ENCODE measurements at regions of chr10 and their contacts with region 1.

Region 1: GRCh38 chr10:16828114-16828568 is 10.9 kb upstream of the RSU1 start:
- DNase-seq: peak; percentile 93
- H3K4me3 ChIP-seq: peak overlapping the region in 1 of 3 experiments; percentile 51
- H3K27ac ChIP-seq: peak overlapping the region; percentile 71
- H3K4me1 ChIP-seq: peaks cover 34% of the 10 kb centered on the region
- H3K27me3 ChIP-seq: no peaks in the 10 kb centered on the region
- CTCF ChIP-seq: peak; percentile 35 to 39
- POLR2A ChIP-seq: no peak

Region 2: DNA sequence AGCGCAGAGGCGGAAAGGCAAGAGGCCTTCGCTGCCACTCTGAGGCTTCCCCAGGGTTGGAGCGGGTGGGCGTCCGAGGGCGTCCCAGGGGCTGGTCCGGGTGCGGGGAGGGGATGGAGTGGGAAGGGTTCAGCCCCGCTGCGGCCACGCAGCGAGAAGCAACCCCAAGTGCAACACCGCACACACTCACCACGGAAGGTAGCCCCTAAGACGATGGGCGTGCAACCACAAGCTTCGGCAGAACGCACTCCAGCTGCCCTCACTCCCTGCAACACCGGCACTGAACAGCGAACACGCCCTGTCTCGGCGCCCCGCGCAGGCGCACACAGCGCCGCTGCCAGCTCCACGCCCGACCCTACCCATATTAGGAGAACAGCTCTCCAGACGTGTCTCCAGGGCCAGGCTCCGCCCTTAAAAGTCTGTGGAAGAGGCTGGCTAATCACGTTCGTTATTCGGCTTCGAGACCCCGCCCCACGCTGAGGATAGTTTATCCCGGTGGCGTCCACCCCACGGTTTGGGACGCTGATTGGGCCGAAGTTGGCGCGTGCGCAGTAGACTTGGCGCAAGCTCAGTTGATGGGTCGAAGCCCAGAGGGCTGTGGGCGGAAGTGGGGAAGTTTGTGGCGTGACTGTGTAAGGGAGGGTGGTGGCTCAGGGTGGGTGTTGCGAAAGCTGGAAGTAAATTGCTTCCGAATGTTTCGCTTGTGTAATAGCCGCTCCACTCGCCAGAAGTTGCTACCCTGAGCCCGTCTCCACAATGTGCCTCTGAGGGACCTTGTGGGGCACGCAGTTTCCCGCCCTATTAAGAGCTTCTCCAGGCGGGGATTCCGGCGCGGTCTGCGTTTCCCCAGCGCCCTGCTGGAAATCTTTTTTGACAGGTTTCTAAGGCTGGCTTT is 10.8 kb before region 1 on chr10 and contains the start of gene RSU1:
- CTCF ChIA-PET with region 1: interaction called, 6 read pairs
- POLR2A ChIA-PET with region 1: interaction called, 5 read pairs
- dilution Hi-C with region 1: no loop called
- intact Hi-C with region 1: loop called (anchors 1 kb)
- DNase-seq: peak; percentile 100
- H3K4me3 ChIP-seq: peak within 1 kb of the TSS; percentile 43 to 86 (median 62)
- H3K27ac ChIP-seq: peak within 1 kb of the TSS; percentile 78
- H3K4me1 ChIP-seq: peaks cover 25% of the 10 kb centered on the region
- H3K27me3 ChIP-seq: no peaks in the 10 kb centered on the region
- CTCF ChIP-seq: no peak
- POLR2A ChIP-seq: peak; percentile 49
- total RNA-seq, gene RSU1: 91.9 and 104 TPM in 2 replicates

Region 3: DNA sequence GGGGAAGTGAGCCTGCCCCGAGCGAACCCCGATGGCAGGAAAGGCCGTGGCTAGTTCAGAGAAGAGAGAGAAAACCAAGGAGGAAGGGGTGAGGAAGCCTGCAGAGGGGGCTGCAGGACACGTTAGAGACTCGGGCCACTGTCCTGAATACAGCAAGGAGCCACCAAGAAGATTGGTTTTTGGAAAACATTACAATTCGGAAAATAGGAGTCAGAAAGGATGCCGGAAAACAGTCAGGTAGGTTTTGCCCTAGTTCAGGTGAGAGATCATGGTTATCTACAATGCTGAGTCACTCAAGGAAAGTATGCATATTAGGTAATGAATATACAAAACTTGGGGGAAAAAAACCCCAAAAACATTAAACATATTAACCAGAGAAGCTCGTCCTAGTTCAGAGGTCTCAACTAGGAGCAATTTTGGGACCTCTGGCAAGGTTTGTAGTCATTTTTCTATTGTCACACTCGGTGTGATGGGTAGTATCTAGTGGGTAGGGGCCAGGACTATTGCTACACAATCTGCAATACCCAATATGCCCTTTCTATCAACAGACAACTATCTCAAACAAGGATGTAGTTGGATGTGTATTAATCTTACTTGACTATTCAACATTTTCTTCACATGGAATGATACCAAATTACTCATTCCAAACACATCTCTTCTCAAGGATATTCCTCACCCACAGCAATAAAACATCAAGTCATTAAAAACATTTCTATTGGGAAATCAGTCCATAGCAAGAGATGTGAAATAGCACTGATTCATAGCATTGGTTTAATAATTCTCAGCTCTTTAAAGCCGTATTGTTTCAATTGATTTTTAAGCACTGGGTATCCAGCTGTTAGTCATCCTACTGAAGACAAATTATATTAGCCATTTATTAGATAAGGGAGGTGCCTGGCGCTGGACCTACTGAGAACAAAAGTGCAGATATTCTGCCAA is 63.5 kb after region 1 on chr10:
- CTCF ChIA-PET with region 1: no interaction called
- POLR2A ChIA-PET with region 1: no interaction called
- dilution Hi-C with region 1: no loop called
- intact Hi-C with region 1: loop called (anchors 2 kb)
- DNase-seq: peak; percentile 70
- H3K4me3 ChIP-seq: no peak overlapping the region
- H3K27ac ChIP-seq: peak overlapping the region; percentile 5
- H3K4me1 ChIP-seq: peaks cover 8% of the 10 kb centered on the region
- H3K27me3 ChIP-seq: no peaks in the 10 kb centered on the region
- CTCF ChIP-seq: peak; percentile 45 to 58
- POLR2A ChIP-seq: peak; percentile 94

Region 4: DNA sequence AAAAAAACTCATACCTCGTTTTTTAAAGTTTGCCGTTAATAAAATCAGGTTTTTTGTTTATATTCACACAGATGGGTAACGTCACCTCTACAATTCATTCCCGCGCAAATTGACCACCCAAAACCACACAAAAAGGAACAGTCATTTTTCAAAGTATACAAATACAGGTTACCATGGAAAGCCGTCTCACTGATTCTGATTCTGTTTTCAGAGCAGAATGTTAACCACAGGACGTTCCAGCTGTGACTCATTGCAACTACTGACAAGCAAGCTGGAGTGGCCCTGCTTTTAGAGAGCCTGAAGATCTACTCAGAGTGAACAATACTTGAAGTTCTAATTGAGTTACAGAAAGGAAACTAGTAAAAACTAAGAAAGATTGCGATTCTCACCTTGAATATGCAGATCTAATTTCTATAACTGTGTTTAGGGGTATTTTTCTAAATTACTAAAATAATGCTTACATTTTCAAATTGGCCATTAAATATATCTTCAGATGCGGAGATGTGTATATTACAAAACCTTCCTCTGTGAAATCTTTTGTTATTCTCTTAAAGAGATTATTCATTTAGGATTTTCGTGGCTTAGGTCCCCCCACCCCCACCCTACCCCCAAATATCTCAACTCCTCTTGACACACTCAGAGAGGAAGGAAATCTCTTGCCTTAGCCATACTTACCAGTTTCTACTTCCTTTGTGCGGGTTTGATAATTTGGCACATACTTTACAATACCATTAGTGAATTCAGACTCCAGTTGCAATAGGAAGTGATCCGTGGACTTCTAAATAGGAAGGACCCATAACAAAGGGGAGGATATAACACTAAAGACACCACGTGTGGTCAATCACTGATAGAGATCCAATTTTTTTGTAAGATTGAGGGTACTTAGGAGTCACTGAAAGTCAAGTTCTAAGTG is 195.5 kb after region 1 on chr10:
- CTCF ChIA-PET with region 1: interaction called, 3 read pairs
- POLR2A ChIA-PET with region 1: interaction called, 4 read pairs
- dilution Hi-C with region 1: no loop called
- intact Hi-C with region 1: loop called (anchors 1 kb)
- DNase-seq: peak; percentile 96
- H3K4me3 ChIP-seq: peak overlapping the region in 1 of 3 experiments; percentile 35
- H3K27ac ChIP-seq: peak overlapping the region; percentile 72
- H3K4me1 ChIP-seq: peaks cover 51% of the 10 kb centered on the region
- H3K27me3 ChIP-seq: no peaks in the 10 kb centered on the region
- CTCF ChIP-seq: no peak
- POLR2A ChIP-seq: peak; percentile 22

Region 5: DNA sequence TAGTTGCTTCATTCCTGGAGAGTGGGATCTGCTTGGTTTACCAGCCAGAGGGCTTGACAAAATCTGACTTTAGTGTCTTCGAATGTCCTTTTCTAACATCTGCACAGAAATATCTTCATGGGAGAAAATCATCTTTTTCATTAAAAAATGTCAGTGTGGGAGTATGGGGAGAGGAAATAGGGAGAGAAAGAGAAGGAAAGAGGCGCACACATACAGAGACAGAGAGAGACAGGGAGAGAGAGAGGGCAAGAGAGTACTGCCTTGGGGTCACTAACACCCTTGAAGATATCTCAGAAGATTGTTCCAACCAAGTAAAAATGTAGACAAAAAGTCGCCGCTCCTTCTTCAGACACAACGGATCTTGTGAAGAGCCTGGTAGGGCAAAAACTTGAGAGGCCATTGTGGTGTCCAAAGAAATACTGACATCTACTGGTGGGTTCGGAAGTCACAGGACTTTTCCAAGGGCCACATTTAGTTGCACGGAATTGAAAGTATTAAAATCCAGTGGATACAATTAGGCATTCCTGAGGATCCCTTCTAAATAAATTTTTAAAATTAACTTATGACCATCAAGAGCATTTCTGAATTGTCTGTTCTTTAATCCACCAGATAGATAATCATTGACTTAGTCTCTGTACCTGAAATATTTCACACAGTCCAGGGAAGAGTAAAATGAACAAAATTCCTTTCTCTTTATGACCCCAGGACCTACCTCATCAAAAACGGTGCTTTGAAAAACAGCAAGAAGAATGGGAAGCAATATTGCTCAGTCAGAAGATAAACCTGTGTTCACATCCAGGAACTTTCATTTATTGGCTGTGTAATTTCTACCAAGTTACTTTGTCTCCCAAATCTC is 429.6 kb after region 1 on chr10:
- CTCF ChIA-PET with region 1: interaction called, 14 read pairs
- POLR2A ChIA-PET with region 1: no interaction called
- dilution Hi-C with region 1: no loop called
- intact Hi-C with region 1: loop called (anchors 1 kb)
- DNase-seq: peak; percentile 80
- H3K4me3 ChIP-seq: peak overlapping the region in 1 of 3 experiments; percentile 13
- H3K27ac ChIP-seq: peak overlapping the region; percentile 33
- H3K4me1 ChIP-seq: peaks cover 4% of the 10 kb centered on the region
- H3K27me3 ChIP-seq: no peaks in the 10 kb centered on the region
- CTCF ChIP-seq: peak; percentile 64 to 73
- POLR2A ChIP-seq: no peak

Region 6: GRCh38 chr10:17430647-17431355 is 602.7 kb after region 1 on chr10:
- CTCF ChIA-PET with region 1: interaction called, 4 read pairs
- POLR2A ChIA-PET with region 1: no interaction called
- dilution Hi-C with region 1: no loop called
- intact Hi-C with region 1: loop called (anchors 1 kb)
- DNase-seq: peak; percentile 87
- H3K4me3 ChIP-seq: no peak overlapping the region
- H3K27ac ChIP-seq: no peak overlapping the region
- H3K4me1 ChIP-seq: peaks cover 22% of the 10 kb centered on the region
- H3K27me3 ChIP-seq: no peaks in the 10 kb centered on the region
- CTCF ChIP-seq: peak; percentile 84 to 90
- POLR2A ChIP-seq: no peak

Region 7: DNA sequence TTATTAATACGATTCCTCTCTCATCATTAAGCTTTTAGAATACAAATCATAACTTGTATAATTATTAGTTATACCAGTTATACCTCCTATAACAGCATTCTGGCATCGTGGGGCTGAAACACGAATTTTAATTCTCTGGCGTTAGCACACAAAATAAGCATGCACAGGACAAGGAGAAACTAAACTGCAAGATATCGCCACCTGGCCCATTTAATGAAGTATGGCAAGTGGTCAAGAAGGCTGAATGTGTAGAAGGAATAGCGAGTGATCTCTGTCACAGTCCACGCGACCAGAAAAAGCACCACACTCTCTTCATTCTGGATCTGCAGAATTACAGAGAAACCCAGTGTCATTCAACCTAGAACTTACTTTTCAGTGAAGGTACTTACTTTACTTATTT is 770.9 kb after region 1 on chr10:
- CTCF ChIA-PET with region 1: no interaction called
- POLR2A ChIA-PET with region 1: no interaction called
- dilution Hi-C with region 1: no loop called
- intact Hi-C with region 1: loop called (anchors 1 kb)
- DNase-seq: peak; percentile 63
- H3K4me3 ChIP-seq: no peak overlapping the region
- H3K27ac ChIP-seq: no peak overlapping the region
- H3K4me1 ChIP-seq: no peaks in the 10 kb centered on the region
- H3K27me3 ChIP-seq: no peaks in the 10 kb centered on the region
- CTCF ChIP-seq: peak; percentile 43 to 44
- POLR2A ChIP-seq: no peak

Measured in endothelial cell of umbilical vein (primary cell).